ENCODE measurements at regions of chr1 and their contacts with region 1.

Region 1: GRCh38 chr1:184051485-184052193 is at the start of gene TSEN15:
- DNase-seq: peak; percentile 89
- ATAC-seq: peak; percentile 97
- H3K4me3 Mint-ChIP-seq: peak within 1 kb of the TSS; percentile 93
- H3K27ac Mint-ChIP-seq: peak within 1 kb of the TSS; percentile 99
- H3K4me1 Mint-ChIP-seq: peaks cover 33% of the 10 kb centered on the region
- H3K27me3 Mint-ChIP-seq: peaks cover 9% of the 10 kb centered on the region
- total RNA-seq, gene TSEN15: 44.1 to 47.3 TPM

Region 2: GRCh38 chr1:184036517-184036949 is 15.1 kb before region 1 on chr1:
- CTCF ChIA-PET with region 1: interaction called, 8 read pairs
- POLR2A ChIA-PET with region 1: no interaction called
- intact Hi-C with region 1: loop called (anchors 1 to 2 kb)
- DNase-seq: peak; percentile 24
- ATAC-seq: peak; percentile 5
- H3K4me3 Mint-ChIP-seq: peak overlapping the region; percentile 61
- H3K27ac Mint-ChIP-seq: no peak overlapping the region
- H3K4me1 Mint-ChIP-seq: peaks cover 9% of the 10 kb centered on the region
- H3K27me3 Mint-ChIP-seq: peaks cover 56% of the 10 kb centered on the region

Measured in activated CD4-positive, alpha-beta T cell treated with anti-CD3 and anti-CD28 coated beads for 36 hours (primary cell).